ENCODE measurements at regions of chr3 and their contacts with region 1.

Region 1: GRCh38 chr3:66276705-66277274 is 56.0 kb downstream of the SLC25A26 start:
- DNase-seq: peak; percentile 53
- ATAC-seq: no peak

Region 2: GRCh38 chr3:66372681-66373350 is 96.0 kb after region 1 on chr3:
- intact Hi-C with region 1: loop called (anchors 2 to 5 kb)
- DNase-seq: peak; percentile 52
- ATAC-seq: peak; percentile 58 to 69

Region 3: GRCh38 chr3:66518126-66518525 is 241.3 kb after region 1 on chr3:
- intact Hi-C with region 1: loop called in 1 of 2 experiments (anchors 10 kb)
- DNase-seq: no peak
- ATAC-seq: peak in 1 of 2 donors; percentile 44

Region 4: DNA sequence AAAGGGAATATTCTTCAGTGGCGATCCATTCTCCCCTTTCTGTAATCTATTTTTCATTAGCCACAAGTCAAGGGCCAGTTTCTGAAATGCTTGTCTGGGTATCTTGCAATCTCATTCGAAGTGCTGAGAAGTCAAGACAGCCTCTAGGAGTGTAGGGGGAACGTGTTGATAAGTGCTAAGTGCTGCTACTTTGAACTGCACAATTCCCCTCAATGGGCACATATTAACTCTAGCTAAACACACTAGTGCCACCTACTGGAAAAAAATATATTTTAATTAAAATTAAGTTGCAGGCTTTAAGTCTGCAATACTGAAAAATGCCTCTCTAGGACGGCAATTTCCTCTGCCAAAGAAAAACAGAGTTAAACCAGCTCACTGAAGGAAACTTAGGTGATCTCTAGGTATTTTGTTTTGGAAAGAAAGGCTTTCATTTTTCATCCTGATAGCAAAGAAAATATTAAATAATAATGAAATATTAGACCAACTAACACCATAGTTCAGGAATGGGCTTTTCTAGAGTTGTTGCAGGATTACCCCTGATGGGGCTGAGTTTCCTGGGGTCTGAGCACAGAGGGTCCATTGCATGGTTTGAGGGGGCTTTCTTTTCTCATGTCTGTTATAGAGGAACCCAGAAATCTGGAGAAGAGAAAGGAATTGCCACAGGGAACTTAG is 539.4 kb after region 1 on chr3:
- intact Hi-C with region 1: loop called (anchors 2 to 5 kb)
- DNase-seq: no peak
- ATAC-seq: peak; percentile 87 to 90